Posterior vena cava (tissue), 2 donors: ENCODE measurements at regions of chr17 and their contacts with region 1.

Region 1: DNA sequence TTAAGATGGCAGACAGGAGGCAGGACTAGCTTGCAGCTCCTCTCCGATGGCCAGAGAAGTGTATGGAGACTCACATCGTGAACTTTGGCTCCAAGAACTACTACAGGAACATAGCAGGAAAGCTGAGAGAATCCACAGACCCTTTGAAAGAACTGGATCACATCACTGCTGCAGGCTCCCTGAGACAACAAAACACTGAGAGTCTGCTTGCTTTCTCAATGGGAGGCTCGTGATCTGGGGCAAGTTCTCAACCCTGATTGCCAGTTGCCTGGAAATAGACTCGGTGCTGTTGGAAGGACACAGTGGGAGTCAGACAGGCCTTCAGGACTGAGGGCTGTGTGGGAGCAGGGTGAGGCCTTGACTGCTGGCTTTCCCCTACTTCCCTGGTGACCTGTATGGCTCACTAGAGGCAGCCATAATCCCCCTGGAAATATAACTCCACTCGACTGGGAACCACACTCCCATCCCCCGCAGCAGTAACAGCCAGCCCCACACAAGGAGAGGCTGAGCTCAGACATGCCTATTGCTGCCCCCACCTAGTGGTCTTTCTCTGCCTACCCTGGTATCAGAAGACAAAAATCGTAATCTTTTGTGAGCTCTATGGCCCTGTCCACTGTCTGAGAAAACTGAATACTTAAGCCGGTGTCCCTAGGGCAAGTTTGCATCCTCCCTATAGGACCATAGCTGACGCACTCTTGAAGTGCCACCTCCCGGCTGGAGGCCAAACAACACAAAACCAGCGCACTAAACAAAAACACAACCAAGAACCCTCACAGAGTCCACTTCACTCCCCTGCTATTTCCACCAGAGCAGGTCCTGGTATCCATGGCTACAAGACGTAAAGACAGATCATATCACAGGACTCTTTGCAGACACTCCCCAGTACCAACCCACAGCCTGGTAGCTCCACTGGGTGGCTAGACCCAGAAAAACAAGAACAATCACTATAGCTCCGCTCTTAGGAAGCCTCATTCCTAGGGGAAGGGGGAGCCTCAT is 238.3 kb downstream of the CEP112 start:
- DNase-seq: no peak

Region 2: DNA sequence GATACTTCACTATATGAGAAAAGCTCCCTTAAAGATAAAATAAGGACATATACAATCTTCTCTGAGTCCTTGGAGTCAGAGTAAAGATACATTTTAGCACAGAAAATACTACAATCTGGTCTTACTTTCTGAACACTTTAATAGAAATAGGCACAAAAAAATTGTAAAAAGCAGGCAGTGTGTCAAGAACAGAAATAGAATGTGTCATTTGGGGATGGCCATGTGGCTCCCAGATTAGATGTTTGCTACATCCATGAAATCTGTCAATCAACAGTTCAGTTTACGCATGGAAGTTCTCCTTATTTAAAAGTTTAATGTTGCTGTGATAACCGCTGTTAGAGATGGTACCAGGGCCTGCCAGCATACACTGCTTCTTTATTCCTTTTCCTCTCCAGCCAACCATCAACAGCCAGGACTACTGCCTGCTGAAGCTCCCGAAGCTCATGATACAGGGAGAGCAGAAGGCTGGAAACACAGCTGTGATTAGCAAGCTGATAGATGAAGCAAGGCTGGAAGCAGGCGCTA is 40.2 kb before region 1 on chr17:
- intact Hi-C with region 1: loop called in 1 of 2 experiments (anchors 1 kb)
- DNase-seq: no peak

Region 3: DNA sequence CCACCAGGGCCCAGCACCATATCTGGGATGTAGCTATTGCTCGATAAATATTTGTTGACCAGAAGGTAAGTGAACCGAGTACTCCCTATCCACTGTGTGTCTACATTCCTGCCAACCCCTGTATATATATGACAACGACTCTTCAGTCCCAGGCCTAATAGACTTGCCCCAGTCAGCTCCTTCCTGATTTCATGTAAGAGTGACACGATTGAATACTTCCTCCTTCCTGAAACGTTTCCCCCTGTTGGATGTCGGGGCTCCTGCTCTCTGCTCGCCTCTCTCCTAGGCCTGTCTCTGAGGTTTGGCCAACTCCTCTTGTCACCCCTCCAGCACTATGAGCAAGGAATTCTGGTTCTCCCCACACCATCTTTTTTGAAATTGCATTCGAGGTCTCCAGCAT is 527.7 kb after region 1 on chr17:
- intact Hi-C with region 1: no loop called
- DNase-seq: no peak